ENCODE measurements at regions of chr5 and their contacts with region 1.

Region 1: DNA sequence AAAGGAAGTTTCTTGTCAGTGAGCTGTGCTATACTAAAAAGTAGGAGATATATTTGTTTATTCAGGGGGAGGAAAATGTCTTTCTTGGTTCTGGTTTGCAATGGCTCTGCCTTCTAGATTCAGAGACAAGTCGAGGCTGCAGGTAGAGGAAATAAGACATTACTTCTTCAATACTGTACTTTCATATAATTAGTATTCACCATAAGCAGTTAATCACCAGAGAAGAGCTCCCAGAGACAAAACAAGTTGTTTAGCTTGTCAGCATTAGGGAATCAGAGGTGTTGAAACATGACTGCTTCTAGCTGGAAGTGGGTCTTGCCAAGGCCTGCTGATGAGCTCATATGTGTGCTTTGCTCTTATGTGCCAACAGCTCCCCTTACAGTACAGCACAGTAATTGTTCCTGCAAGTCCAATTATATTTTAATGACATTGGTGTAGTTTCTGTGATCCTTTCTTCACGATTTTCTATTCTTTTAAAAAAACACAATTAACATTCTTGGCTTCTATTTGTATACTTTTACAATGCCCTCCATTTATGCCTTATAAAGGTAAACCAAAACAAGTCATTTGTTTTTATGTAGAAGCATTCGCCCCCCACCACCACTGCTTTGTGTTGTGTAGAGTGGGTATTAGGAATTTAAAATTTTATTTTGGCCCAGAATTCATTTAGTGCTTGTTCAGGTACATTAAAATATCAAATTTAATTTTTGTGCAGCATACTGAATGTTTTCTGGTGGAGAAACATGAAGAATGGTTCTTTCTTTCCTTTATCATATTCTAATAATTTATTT is 112.2 kb downstream of the RPS23 start:
- DNase-seq: peak; percentile 86 to 87
- ATAC-seq: peak; percentile 100
- H3K4me3 ChIP-seq: no peak overlapping the region
- H3K27ac ChIP-seq: peak overlapping the region; percentile 51 to 76 (median 72)
- H3K4me1 ChIP-seq: peaks cover 14 to 25% of the 10 kb centered on the region in 2 donors
- H3K27me3 ChIP-seq: no peaks in the 10 kb centered on the region
- CTCF ChIP-seq: peak; percentile 65 to 78 (median 70)
- POLR2A ChIP-seq: no peak

Region 2: DNA sequence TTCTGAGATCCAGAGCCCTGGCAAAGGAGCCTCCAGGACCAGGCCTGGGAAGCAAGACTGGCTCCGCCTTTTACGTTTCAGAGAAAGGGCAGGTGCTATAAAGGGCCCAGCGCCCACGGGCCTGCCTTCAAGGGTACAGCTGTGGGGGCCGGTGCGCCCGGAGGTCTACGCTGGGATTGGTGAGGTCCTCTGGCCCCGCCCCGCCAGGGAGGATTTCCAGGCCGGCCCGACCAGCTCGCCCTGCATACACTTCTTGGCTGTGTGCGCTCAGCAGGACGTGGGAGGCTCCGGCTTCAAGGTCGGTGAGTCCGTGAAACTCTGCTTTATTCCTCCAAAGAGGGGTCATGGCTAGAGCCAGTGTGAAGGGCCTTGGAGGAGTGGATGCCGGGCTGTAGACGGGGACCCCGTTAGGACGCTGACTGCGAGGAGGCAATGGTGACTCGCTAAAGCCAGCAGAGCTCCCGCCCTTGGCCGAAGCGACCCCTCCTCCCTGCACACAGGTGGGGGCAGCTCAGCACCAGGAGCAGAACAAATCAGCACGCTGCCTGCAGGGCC is 932.8 kb before region 1 on chr5 and contains the start of gene CKMT2:
- in situ Hi-C with region 1: no loop called
- intact Hi-C with region 1: no loop called
- DNase-seq: peak; percentile 90 to 97
- ATAC-seq: peak; percentile 47 to 59
- H3K4me3 ChIP-seq: peak within 1 kb of the TSS; percentile 61 to 75 (median 68)
- H3K27ac ChIP-seq: peak within 1 kb of the TSS; percentile 98 to 100 (median 98)
- H3K4me1 ChIP-seq: peaks cover 47 to 49% of the 10 kb centered on the region in 2 donors
- H3K27me3 ChIP-seq: no peaks in the 10 kb centered on the region
- CTCF ChIP-seq: no peak
- POLR2A ChIP-seq: peak; percentile 88 to 91
- total RNA-seq, gene CKMT2: 550 to 1,114 (median 879) TPM

Region 3: DNA sequence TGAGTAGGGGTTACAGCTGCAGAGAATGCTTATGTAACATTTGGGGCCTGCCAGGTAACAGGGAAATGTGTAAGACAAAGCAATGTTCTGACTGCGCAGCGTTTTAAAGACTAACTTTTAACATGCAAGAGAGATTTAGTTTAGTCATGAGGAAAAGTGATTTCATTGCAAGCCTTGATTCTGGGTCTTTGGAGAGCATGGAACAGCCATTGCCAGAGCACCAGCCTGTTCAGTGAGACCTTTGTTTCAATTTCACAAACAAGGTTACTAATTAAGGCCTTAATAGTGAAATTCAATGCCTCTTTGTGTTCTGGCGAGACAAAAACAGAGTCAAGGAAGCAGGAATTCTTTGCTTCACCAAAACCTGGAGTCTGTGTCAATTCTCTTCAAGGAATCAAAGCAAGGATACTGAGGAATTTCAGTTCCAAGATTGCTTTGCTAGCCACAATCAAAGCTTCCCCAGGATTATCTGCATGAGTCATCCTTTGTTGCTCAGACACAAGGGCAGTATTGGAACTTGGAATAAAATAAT is 918.4 kb before region 1 on chr5:
- in situ Hi-C with region 1: no loop called
- intact Hi-C with region 1: loop called (anchors 10 kb)
- DNase-seq: no peak
- ATAC-seq: no peak
- H3K4me3 ChIP-seq: no peak overlapping the region
- H3K27ac ChIP-seq: peak overlapping the region; percentile 98 to 100 (median 98)
- H3K4me1 ChIP-seq: peaks cover 92 to 95% of the 10 kb centered on the region in 2 donors
- H3K27me3 ChIP-seq: no peaks in the 10 kb centered on the region
- CTCF ChIP-seq: no peak
- POLR2A ChIP-seq: no peak

Region 4: GRCh38 chr5:81425569-81425968 is 740.4 kb before region 1 on chr5:
- in situ Hi-C with region 1: loop called in 2 of 4 experiments (anchors 10 kb)
- intact Hi-C with region 1: loop called (anchors 2 kb)
- DNase-seq: no peak
- ATAC-seq: peak; percentile 24 to 48
- H3K4me3 ChIP-seq: no peak overlapping the region
- H3K27ac ChIP-seq: peak overlapping the region; percentile 27 to 55 (median 44)
- H3K4me1 ChIP-seq: peaks cover 37 to 56% of the 10 kb centered on the region in 2 donors
- H3K27me3 ChIP-seq: no peaks in the 10 kb centered on the region
- CTCF ChIP-seq: peak; percentile 47 to 73 (median 62)
- POLR2A ChIP-seq: no peak

Region 5: DNA sequence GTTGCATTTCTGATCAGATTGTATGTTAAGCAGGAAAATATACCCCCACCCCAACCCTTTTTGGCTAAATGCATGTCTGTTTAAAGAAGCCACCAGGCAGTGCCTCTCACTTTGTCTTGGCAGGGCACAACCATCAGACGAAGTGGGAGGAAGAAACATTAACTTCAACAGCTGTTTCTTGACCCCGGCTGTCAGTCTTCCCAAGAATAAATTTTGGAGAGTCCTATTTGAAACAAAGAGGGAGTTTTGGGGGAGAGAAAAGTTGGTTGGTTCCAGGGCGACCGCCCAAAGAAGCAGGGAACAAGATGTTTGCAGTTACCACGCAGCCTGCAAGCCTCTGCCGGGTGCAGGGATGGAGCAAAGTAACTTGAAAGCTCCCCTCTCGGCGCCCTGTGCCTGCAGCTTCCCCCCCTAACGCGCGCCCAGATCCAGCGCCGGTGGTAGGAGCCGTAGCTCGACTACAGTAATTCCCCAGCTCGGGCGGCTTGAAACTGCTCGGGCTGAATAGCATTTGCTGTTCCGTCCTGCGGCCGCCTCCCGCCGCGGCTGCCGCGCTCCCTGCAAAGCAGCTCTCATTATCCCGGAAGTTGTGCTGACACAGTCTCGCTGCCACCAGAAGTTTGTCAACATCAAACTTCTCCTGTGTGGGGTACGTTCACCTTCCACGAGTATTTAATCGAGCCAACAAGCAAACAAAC is 314.3 kb before region 1 on chr5:
- in situ Hi-C with region 1: loop called in 1 of 4 experiments (anchors 25 kb)
- intact Hi-C with region 1: loop called (anchors 2 kb)
- DNase-seq: peak; percentile 89 to 97
- ATAC-seq: peak; percentile 83 to 87
- H3K4me3 ChIP-seq: peak overlapping the region; percentile 49 to 63 (median 55)
- H3K27ac ChIP-seq: peak overlapping the region; percentile 83 to 96 (median 92)
- H3K4me1 ChIP-seq: peaks cover 78 to 82% of the 10 kb centered on the region in 2 donors
- H3K27me3 ChIP-seq: no peaks in the 10 kb centered on the region
- CTCF ChIP-seq: peak in 1 of 5 experiments; percentile 15
- POLR2A ChIP-seq: peak in 1 of 2 donors; percentile 29

Region 6: GRCh38 chr5:82107267-82107666 is 58.7 kb before region 1 on chr5:
- in situ Hi-C with region 1: loop called in 2 of 4 experiments (anchors 5 to 10 kb)
- intact Hi-C with region 1: loop called (anchors 1 kb)
- DNase-seq: no peak
- ATAC-seq: peak; percentile 74 to 79
- H3K4me3 ChIP-seq: no peak overlapping the region
- H3K27ac ChIP-seq: no peak overlapping the region
- H3K4me1 ChIP-seq: peaks cover 7 to 18% of the 10 kb centered on the region in 2 donors
- H3K27me3 ChIP-seq: no peaks in the 10 kb centered on the region
- CTCF ChIP-seq: peak; percentile 38 to 56 (median 54)
- POLR2A ChIP-seq: no peak

Measured in gastrocnemius medialis (tissue), 4 donors.